ENCODE measurements at regions of chr2 and their contacts with region 1.

Region 1: DNA sequence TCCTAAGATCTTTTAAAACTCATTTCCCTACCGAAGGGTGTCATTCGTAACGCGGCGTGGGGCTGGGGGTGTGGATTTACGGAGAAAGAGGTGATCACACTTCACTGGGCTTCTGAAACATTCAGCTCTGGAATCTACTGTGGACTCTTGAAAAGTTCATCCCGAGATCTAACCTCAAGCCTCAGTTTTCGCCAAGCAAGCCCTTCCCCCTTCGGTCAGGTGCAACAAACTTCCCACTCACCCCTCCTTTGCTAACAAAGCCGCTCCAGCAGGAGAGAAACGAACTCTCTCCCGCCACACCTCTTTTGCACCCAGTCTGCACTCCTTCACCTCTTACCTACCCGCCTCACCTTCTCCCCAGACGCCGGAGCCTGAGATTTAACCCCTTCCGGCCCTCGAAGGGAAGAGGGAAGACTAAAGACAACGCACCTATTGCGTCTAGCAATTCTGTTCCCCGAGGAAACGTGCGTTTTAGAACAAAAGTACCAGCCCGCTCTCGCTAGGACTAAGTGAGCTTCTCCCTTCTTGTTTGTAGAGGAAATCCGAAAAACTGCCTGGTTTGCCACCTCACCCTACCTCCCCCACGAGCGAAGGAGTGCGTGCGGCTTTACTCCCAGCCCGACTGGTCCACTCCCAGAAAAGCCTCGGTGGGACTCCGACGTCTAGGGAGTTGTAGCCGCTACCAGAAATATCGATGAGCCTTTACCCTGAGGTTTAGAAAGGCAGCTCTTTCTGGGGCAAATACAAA is 538 bp upstream of the PEX13 start:
- DNase-seq: peak; percentile 83
- H3K4me3 Mint-ChIP-seq: peak overlapping the region; percentile 94
- H3K27ac Mint-ChIP-seq: peak overlapping the region; percentile 96
- H3K4me1 Mint-ChIP-seq: peaks cover 35% of the 10 kb centered on the region
- H3K27me3 Mint-ChIP-seq: no peaks in the 10 kb centered on the region

Region 2: DNA sequence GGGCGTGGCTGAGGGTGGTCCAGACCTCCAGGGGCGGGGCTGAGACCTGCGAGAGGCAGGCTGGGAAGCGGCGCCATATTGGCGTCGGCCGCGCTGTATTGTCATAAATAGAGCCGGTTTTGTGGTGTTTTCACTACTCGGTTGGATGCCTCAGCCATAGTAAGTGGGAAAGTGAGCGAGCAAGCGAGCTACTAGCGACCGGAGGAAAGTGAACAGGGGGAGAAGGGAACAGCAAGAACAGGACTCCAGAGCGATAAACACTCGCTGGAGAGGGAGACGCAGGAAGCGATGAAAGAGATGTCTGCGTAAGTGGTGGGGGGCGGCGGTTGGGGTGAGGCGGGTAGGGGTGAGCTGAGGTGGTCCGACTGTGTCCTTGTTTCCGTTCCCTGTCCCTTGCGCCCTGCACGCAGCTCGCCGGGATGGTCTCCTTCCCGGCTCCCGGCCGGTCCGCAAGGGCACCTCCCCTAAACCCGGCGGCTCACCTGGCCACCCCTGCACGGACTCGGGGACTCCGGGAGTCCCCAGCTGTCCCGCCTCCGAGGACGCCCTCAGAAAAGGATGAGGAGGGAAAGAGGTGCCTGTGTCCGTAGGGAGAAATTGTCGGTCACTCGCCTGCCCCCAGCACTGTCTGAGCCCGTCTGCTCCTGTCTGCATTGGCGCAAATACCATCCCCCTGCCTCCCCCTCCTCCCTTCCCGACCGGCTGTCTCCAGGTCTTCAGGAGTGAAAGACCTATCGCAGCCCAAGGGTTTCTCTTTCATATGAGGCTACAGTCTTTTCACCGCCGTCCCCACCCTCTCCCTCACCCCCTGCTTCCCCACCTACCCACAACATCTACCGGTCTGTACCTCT is 260.6 kb before region 1 on chr2 and contains the start of gene PAPOLG:
- CTCF ChIA-PET with region 1: no interaction called
- POLR2A ChIA-PET with region 1: interaction called, 3 read pairs
- intact Hi-C with region 1: loop called (anchors 1 kb)
- DNase-seq: peak; percentile 98
- H3K4me3 Mint-ChIP-seq: peak within 1 kb of the TSS; percentile 99
- H3K27ac Mint-ChIP-seq: peak within 1 kb of the TSS; percentile 96
- H3K4me1 Mint-ChIP-seq: peaks cover 39% of the 10 kb centered on the region
- H3K27me3 Mint-ChIP-seq: no peaks in the 10 kb centered on the region
- total RNA-seq, gene PAPOLG: 14.4 to 15.7 TPM

Region 3: DNA sequence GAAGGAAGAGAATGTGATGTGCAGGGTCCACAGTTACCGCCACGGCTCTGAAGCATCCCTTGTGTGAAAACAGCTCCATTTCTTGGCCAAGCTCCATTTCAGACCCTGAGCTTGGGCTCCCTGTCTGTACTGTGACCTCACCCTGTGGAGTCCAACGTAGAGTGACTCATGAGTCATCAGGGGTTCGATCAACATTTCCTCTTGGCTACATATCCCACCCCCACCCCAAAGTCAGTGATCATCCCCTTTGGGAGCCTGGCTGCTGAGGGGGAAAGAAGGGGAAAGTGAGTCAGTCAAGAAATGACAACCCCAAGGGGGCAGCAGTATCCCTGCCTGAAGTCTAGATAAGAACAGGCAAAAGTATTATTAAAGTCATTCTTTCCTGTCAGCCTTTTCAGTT is 198.7 kb before region 1 on chr2:
- CTCF ChIA-PET with region 1: no interaction called
- POLR2A ChIA-PET with region 1: no interaction called
- intact Hi-C with region 1: loop called (anchors 1 kb)
- DNase-seq: peak; percentile 74
- H3K4me3 Mint-ChIP-seq: no peak overlapping the region
- H3K27ac Mint-ChIP-seq: peak overlapping the region; percentile 97
- H3K4me1 Mint-ChIP-seq: peaks cover 46% of the 10 kb centered on the region
- H3K27me3 Mint-ChIP-seq: no peaks in the 10 kb centered on the region

Region 4: GRCh38 chr2:60881047-60881932 is 135.7 kb before region 1 on chr2 and contains the start of gene REL:
- CTCF ChIA-PET with region 1: no interaction called
- POLR2A ChIA-PET with region 1: interaction called, 6 read pairs
- intact Hi-C with region 1: loop called (anchors 2 kb)
- DNase-seq: peak; percentile 94
- H3K4me3 Mint-ChIP-seq: peak within 1 kb of the TSS; percentile 100
- H3K27ac Mint-ChIP-seq: peak within 1 kb of the TSS; percentile 96
- H3K4me1 Mint-ChIP-seq: peaks cover 27% of the 10 kb centered on the region
- H3K27me3 Mint-ChIP-seq: no peaks in the 10 kb centered on the region
- total RNA-seq, gene REL: 37.1 to 38.1 TPM

Region 5: DNA sequence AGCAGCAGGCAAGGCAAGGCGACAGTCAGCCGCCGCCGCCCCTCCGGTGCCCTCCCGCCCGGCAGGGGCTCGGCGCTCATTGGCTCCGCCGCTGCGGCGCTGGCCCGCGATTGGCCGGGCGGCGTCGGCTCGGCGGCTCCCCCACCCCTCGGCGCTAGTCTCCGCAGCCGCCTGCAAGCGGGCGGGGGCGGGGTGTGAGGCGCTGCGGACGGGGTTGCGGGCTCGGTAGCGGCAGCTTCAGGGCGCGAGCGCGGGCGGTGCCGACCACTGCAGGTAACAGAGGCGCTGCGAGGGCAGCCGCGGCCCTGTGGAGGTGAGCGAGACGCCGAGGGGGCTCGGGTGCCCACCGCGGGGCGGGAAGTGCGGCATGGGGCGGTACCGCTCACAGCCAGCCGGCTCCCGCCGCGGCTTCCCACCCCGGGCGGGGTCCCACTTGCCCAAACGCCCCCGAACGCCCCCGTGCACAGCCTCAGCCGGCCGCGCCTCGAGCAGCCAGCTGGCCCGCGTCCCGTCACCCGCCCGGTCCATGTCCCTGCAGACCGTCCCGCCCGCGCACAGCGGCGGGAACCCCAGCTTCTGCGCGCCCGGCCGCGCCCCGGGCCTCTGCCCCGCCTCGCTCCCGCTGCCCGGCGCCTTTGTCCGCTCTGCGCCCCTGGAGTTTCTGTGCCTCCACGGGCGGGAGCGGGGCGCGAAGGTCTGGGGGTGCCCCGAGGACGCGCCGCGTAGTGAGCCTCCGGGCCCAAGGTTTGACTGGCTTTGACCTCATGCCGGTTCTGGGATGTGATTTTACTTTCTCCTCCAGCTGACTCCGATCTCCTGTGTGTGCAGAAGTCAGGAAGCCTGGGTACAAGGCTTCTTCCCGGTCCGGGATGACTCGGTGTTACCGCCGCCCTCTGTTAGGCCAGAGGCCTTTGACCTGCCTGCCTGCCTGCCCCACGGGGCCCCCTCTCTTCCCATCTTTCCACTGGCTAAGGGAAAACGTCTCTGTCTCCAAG is 49.0 kb after region 1 on chr2 and contains the start of gene SANBR:
- CTCF ChIA-PET with region 1: no interaction called
- POLR2A ChIA-PET with region 1: no interaction called
- intact Hi-C with region 1: loop called (anchors 1 kb)
- DNase-seq: peak; percentile 89
- H3K4me3 Mint-ChIP-seq: peak within 1 kb of the TSS; percentile 81
- H3K27ac Mint-ChIP-seq: no peak within 1 kb of the TSS
- H3K4me1 Mint-ChIP-seq: peaks cover 4% of the 10 kb centered on the region
- H3K27me3 Mint-ChIP-seq: no peaks in the 10 kb centered on the region
- total RNA-seq, gene SANBR: 5.3 to 5.9 TPM

Region 6: DNA sequence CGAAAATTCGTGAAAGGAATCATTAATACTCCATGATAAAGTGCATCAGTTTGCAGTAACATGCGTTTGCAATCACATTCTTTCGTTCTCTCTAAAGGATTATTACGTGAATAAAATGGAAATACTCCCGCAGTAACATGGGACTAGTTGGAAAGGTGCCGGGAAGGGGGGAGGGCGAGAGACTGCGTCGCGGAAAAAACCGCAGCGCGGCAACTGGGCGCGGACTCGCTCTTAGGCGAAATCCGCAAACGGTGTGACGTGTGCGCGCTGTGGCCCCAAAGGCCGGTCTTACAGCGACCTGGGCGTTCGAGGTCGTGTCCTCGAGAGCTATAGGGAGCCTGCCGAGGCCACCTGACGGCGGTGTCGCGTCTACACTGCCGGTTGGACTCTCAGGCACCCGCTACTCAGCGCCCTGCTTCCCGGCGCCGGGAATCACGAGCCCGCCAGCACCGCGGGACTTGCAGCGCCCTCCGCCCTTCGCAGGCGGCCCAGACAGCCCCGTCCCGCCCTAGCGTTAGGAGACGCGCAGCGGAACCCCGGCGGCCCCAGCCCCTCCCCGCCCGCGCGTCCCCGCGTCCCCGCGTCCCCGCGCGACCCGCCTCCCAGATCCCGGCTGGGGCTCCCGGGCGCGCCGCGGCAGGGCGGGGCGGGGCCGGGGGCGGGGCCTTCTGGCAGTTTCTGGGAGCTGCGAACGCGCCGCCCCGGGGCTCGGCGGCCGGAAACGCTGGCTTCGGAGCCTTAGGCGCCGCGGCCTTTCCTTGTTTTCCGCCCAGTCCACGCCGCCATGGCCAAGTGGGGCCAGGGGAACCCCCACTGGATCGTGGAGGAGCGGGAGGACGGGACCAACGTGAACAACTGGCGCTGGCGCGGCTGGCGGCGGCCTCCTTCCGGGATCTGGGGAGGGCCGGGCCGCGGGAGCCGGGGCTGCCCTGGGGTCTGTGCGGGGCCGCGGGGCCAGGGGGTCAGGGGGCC is 160.1 kb after region 1 on chr2:
- CTCF ChIA-PET with region 1: no interaction called
- POLR2A ChIA-PET with region 1: no interaction called
- intact Hi-C with region 1: loop called (anchors 1 kb)
- DNase-seq: peak; percentile 95
- H3K4me3 Mint-ChIP-seq: peak overlapping the region; percentile 89
- H3K27ac Mint-ChIP-seq: peak overlapping the region; percentile 94
- H3K4me1 Mint-ChIP-seq: peaks cover 47% of the 10 kb centered on the region
- H3K27me3 Mint-ChIP-seq: no peaks in the 10 kb centered on the region

Region 7: DNA sequence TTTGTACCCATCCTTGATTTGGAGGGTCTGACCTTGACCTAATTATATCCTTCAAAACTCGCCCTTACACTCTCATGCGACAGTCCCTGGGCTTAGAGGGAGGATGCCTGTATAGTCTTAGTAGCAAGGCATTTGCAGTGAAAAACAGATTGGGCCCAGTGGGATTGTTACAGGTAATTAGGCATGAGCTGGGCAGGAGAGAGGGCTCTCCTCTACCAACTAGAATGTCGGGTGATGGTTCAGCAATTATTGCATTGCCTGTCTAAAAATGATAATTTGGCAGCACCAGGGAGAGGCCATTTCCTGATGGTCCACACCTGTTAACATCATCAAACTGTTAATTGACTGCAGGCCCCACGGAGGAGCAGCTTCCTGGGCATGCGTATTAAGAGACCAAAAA is 920.9 kb after region 1 on chr2:
- CTCF ChIA-PET with region 1: no interaction called
- POLR2A ChIA-PET with region 1: no interaction called
- intact Hi-C with region 1: no loop called
- DNase-seq: no peak
- H3K4me3 Mint-ChIP-seq: no peak overlapping the region
- H3K27ac Mint-ChIP-seq: no peak overlapping the region
- H3K4me1 Mint-ChIP-seq: peaks cover under 1% of the 10 kb centered on the region
- H3K27me3 Mint-ChIP-seq: no peaks in the 10 kb centered on the region

Measured in activated CD4-positive, alpha-beta memory T cell treated with anti-CD3 and anti-CD28 coated beads for 36 hours (primary cell).